CD4-positive, alpha-beta T cell (primary cell): ENCODE measurements at regions of chr16 and their contacts with region 1.

Region 1: DNA sequence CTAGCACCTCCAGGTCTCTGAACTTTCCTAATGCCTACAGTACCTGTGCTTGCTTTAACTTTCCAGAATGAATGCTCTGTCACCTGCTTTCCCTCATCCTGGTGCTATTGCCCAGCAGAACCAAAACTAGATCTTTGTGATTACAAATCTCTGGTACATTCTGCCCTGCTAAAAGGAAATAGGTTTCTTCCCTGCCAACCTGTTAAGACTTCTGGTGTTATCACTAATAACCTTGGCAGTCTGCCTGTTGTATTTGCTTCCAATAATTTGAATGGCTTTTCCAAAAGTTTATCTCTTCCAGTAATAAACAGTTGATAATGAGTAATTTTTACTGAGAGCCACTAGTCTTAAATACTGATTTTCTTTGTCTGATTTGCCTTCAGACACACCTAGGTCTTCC is 15.4 kb downstream of the PDZD9 start:
- DNase-seq: no peak
- ATAC-seq: no peak
- H3K4me3 ChIP-seq: no peak overlapping the region
- H3K4me3 Mint-ChIP-seq: no peak overlapping the region
- H3K27ac ChIP-seq: no peak overlapping the region
- H3K27ac Mint-ChIP-seq: peak overlapping the region; percentile 56
- H3K4me1 ChIP-seq: no peaks in the 10 kb centered on the region
- H3K4me1 Mint-ChIP-seq: peaks cover 6% of the 10 kb centered on the region
- H3K27me3 ChIP-seq: no peaks in the 10 kb centered on the region
- H3K27me3 Mint-ChIP-seq: no peaks in the 10 kb centered on the region
- CTCF ChIP-seq: no peak

Region 2: GRCh38 chr16:21971856-21972255 is 13.7 kb before region 1 on chr16:
- CTCF ChIA-PET with region 1: no interaction called
- POLR2A ChIA-PET with region 1: no interaction called
- intact Hi-C with region 1: loop called in 1 of 2 experiments (anchors 2 kb)
- DNase-seq: no peak
- ATAC-seq: no peak
- H3K4me3 ChIP-seq: no peak overlapping the region
- H3K4me3 Mint-ChIP-seq: no peak overlapping the region
- H3K27ac ChIP-seq: no peak overlapping the region
- H3K27ac Mint-ChIP-seq: peak overlapping the region; percentile 24
- H3K4me1 ChIP-seq: no peaks in the 10 kb centered on the region
- H3K4me1 Mint-ChIP-seq: no peaks in the 10 kb centered on the region
- H3K27me3 ChIP-seq: no peaks in the 10 kb centered on the region
- H3K27me3 Mint-ChIP-seq: no peaks in the 10 kb centered on the region
- CTCF ChIP-seq: no peak